GM18951 (cell line): ENCODE measurements at regions of chrX and their contacts with region 1.

Region 1: DNA sequence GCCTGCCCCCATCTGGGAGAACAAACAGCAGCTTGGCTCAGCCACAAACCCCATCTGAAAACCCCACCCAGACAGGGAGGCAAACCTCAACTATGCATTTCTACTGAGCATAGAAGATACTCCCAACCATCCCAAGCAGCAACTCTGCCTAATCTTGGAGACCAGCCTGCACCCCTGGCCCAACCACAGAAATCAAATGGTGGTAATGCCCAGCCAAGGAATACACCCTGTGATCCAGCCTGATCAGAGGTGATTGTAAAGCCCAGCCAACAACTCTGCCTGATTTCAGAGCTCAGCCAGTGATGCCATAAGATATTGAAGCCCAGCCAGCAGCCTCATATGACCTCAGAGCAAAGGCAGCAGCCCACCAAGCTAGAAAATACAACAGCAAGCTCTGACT is 19.8 kb downstream of the TMLHE start:
- POLR2A ChIP-seq: no peak

Region 2: GRCh38 chrX:153947009-153947769 is 1645.8 kb before region 1 on chrX:
- in situ Hi-C with region 1: no loop called
- POLR2A ChIP-seq: no peak

Region 3: DNA sequence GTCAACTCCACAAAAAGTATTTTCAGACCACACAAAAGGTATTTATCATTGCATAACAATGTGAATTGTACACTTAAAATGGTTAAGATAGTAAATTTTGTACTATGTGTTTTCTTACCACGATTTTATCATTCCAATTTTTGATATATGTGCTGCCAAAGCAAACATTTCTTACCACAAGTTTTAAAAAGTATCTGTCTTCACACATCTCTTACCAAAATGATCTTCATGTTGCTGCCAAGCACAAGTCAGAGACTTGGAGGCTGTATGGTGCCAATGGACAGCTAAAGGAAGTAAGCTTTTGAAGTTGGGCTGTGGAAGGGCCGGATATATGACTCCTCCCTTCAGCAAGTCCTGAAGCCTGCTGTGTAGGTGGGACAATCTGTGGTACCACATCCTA is 48.1 kb before region 1 on chrX:
- in situ Hi-C with region 1: loop called (anchors 5 kb)
- POLR2A ChIP-seq: no peak

Region 4: DNA sequence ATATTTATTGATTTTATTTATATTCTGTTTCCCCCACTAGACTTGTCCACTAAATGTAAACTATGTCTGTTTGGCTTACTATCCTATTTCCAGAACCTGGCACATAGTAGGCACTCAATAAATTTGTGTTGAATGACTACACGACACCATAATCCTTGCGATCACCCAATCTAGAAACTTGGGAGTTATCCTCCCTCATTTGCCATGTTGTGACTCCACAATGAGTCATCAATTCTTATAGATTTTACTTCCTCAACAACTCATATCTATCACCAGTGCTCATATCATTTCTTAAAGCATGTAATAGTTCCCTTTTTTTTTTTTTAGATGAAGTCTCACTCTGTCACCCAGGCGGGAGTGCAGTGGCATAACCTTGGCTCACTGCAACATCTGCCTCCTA is 248.3 kb after region 1 on chrX:
- in situ Hi-C with region 1: no loop called
- POLR2A ChIP-seq: no peak